Calu3 (cell line): ENCODE measurements at regions of chr10 and their contacts with region 1.

Region 1: DNA sequence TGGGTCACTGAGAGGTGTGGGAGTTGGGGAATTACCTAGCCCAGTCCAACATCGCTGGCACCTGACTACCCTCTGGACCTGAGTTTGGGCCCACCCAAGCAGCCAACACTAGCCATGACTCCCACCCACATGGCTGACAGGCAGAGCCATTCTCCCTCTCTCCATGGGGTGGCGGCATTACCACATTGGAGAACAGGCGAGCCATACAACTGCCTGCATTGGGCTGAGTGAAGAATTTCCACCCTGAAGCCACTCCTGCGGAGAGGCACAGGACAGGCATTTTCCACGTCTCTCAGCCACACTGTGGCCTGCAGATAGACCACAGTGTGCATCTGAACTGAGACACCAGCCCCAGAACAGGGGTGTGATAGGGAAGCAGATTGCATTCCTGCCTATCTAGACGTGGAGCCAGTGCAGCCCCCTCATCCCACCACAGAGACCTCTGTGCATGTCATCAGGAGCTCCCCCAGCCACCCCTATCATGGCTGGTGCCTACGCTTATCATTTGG is 58.2 kb upstream of the ANTXRL start:
- DNase-seq: peak; percentile 97
- H3K4me3 Mint-ChIP-seq: no peak overlapping the region
- H3K27ac Mint-ChIP-seq: no peak overlapping the region
- H3K4me1 Mint-ChIP-seq: peaks cover 11% of the 10 kb centered on the region
- H3K27me3 Mint-ChIP-seq: peaks cover 64% of the 10 kb centered on the region
- CTCF ChIP-seq: peak; percentile 99

Region 2: DNA sequence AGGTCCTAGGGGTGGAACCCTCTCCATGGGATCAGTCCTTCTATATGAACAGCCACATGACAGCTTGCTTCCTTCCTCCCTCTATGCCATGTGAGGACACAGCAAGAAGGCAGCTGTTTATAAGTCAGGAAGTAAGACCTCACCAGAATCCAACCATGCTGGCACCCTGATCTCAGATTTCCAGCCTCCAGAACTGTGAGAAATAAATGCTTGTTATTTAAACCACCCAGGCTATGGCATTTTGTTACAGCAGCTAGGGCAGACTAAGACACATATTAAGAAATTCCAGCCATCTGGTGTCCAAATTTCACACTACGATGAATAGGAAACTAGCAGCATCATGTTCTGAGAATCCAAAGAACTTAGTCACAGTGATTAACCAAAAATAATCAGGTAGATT is 696.1 kb before region 1 on chr10:
- CTCF ChIA-PET with region 1: no interaction called
- intact Hi-C with region 1: no loop called
- DNase-seq: no peak
- H3K4me3 Mint-ChIP-seq: no peak overlapping the region
- H3K27ac Mint-ChIP-seq: no peak overlapping the region
- H3K4me1 Mint-ChIP-seq: no peaks in the 10 kb centered on the region
- H3K27me3 Mint-ChIP-seq: no peaks in the 10 kb centered on the region
- CTCF ChIP-seq: no peak

Region 3: GRCh38 chr10:46216836-46217751 is 11.5 kb before region 1 on chr10:
- CTCF ChIA-PET with region 1: interaction called, 16 read pairs
- intact Hi-C with region 1: no loop called
- DNase-seq: peak; percentile 24
- H3K4me3 Mint-ChIP-seq: no peak overlapping the region
- H3K27ac Mint-ChIP-seq: no peak overlapping the region
- H3K4me1 Mint-ChIP-seq: no peaks in the 10 kb centered on the region
- H3K27me3 Mint-ChIP-seq: peaks cover 69% of the 10 kb centered on the region
- CTCF ChIP-seq: no peak

Region 4: DNA sequence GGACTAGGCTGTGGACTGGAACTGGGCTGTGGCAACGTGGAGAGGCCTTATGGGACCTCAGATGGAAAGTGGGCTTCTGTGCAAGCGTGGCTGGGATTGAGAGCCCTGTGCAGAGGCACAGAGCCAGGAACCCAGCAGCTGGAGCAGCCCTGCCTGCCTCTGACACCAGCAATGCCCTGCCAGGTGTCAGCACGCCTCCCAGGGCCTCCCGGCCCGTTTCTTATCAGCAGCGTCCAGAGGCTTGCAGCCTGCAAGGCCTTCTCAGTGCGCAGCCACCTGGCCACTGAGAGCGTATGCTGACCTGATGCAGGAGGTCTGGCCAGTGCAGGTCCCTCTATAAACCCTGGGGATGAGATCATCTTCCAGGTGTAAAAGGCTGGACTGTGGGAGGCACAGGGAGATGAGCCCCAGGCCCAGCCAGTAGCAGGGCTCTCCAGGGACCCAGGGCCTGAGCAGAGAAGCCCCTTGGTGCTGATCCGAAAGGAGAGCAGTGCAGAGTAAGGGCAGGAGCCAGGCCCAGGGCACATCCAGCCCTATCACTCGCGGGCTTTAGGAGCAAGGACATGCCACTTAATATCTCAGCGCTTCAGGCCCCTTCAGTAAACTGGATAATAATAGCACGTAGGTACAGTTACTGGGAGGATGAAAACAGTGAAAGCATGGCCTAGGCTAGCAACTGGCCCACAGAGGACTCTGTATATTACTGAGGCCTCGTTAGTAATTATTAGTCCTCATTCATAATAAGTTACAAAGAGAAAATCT is 19.4 kb after region 1 on chr10:
- CTCF ChIA-PET with region 1: interaction called, 3 read pairs
- intact Hi-C with region 1: loop called (anchors 2 kb)
- DNase-seq: no peak
- H3K4me3 Mint-ChIP-seq: no peak overlapping the region
- H3K27ac Mint-ChIP-seq: no peak overlapping the region
- H3K4me1 Mint-ChIP-seq: no peaks in the 10 kb centered on the region
- H3K27me3 Mint-ChIP-seq: peaks cover 76% of the 10 kb centered on the region
- CTCF ChIP-seq: no peak

Region 5: DNA sequence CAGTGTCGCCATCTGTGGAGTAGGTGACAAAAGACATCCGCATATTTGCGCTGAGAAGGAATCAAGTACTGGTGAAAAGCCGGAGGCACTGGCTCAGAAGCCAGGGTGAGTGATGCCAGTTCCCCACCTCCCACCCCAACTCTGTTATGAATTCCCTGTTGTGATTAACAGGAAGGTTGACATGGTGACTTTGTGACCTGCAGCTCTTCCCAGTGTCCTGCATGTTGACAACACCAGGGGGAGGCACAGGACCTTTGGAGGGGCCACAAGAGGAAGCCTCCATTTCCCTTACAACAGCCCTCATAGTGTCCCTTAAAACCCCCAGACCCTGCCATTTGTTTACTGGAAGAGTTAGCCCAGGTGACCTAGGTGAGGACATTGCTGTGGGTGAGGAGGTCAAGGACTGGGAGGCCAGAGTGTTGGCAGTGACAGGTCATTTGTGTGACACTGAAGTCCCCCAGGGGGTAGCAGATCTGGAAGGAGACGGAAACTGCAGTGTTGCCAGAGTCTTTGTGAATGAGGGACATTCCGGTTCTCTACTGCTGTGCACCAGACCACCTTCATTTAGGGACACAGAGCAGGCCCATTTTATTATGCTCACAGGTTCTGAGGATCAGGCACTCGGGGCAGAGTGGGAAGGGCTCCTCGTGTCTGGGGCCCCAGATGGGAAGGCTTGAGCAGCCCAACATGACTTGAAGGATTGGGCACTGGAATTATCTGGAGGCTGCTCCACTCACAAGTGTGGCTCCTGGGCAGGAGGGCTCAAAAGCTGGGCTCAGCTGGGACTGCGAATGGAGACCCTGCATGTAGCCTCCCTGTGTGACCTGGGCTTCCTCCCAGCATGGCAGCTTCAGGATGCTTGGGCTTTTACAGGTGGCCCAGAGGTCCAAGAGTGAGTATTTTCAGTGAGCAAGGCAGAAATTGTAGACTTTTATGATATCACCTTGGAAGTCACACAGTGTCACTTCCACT is 45.2 kb after region 1 on chr10:
- CTCF ChIA-PET with region 1: no interaction called
- intact Hi-C with region 1: no loop called
- DNase-seq: no peak
- H3K4me3 Mint-ChIP-seq: no peak overlapping the region
- H3K27ac Mint-ChIP-seq: no peak overlapping the region
- H3K4me1 Mint-ChIP-seq: no peaks in the 10 kb centered on the region
- H3K27me3 Mint-ChIP-seq: peaks cover 70% of the 10 kb centered on the region
- CTCF ChIP-seq: no peak

Region 6: GRCh38 chr10:46325023-46325422 is 96.4 kb after region 1 on chr10:
- CTCF ChIA-PET with region 1: interaction called, 3 read pairs
- intact Hi-C with region 1: loop called (anchors 1 kb)
- DNase-seq: no peak
- H3K4me3 Mint-ChIP-seq: no peak overlapping the region
- H3K27ac Mint-ChIP-seq: no peak overlapping the region
- H3K4me1 Mint-ChIP-seq: peaks cover 14% of the 10 kb centered on the region
- H3K27me3 Mint-ChIP-seq: peaks cover 38% of the 10 kb centered on the region
- CTCF ChIP-seq: peak; percentile 74

Region 7: DNA sequence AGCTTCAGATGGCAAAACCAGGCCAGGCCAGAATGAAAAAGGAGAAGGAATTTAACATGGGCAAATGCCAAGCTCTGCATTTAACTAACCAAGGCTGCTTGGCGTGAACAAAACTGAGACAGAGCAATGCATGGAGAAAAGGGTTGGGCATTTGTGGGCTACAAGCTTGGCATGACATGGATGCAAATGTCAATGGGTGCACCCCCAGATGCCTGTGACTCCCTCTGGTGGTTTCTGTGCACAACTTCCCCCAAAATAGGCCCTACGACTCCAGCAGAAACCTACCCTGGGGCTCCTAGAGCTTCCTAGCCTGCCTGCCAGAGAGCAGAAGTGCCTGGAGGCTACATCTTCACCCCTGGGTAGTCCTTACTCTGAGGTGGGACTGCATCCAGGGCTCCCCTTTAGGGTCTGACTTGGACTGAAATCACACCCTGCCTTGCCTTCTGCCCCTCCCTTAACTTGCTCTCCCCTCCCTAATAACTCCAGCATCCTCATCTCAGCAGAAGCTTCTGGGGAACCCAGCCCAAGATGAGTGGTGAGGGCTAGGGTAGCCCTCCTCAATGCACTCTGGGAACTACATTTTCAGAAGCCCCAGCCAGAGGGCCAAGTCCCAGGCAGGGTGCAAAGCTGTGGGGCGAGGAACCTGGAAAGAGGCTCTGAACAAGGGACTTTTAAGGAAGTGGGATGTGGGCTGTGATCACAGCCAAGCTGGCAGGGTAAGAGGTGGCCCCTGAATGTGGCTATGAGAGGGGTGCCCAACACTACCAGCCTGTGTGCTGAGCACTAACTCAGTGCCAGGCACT is 316.6 kb after region 1 on chr10:
- CTCF ChIA-PET with region 1: interaction called, 4 read pairs
- intact Hi-C with region 1: loop called (anchors 1 kb)
- DNase-seq: peak; percentile 70
- H3K4me3 Mint-ChIP-seq: no peak overlapping the region
- H3K27ac Mint-ChIP-seq: no peak overlapping the region
- H3K4me1 Mint-ChIP-seq: peaks cover 37% of the 10 kb centered on the region
- H3K27me3 Mint-ChIP-seq: no peaks in the 10 kb centered on the region
- CTCF ChIP-seq: peak; percentile 89